ENCODE measurements at regions of chr1 and their contacts with region 1.

Region 1: GRCh38 chr1:172588296-172589291 is 55.6 kb downstream of the SUCO start:
- DNase-seq: no peak
- ATAC-seq: peak in 1 of 4 experiments; percentile 19
- H3K4me3 ChIP-seq: no peak overlapping the region
- H3K4me3 Mint-ChIP-seq: no peak overlapping the region
- H3K27ac ChIP-seq: no peak overlapping the region
- H3K27ac Mint-ChIP-seq: peak overlapping the region; percentile 60 to 65
- H3K4me1 ChIP-seq: no peaks in the 10 kb centered on the region
- H3K4me1 Mint-ChIP-seq: peaks cover 13 to 29% (median 21%) of the 10 kb centered on the region in 3 donors
- H3K27me3 ChIP-seq: no peaks in the 10 kb centered on the region
- H3K27me3 Mint-ChIP-seq: no peaks in the 10 kb centered on the region

Region 2: GRCh38 chr1:172566196-172566997 is 22.2 kb before region 1 on chr1:
- CTCF ChIA-PET with region 1: no interaction called
- POLR2A ChIA-PET with region 1: no interaction called
- DNase-seq: no peak
- ATAC-seq: no peak
- H3K4me3 ChIP-seq: no peak overlapping the region
- H3K4me3 Mint-ChIP-seq: no peak overlapping the region
- H3K27ac ChIP-seq: no peak overlapping the region
- H3K27ac Mint-ChIP-seq: peak overlapping the region in 1 of 2 donors; percentile 43
- H3K4me1 ChIP-seq: no peaks in the 10 kb centered on the region
- H3K4me1 Mint-ChIP-seq: peaks cover 5 to 23% (median 5%) of the 10 kb centered on the region in 3 donors
- H3K27me3 ChIP-seq: no peaks in the 10 kb centered on the region
- H3K27me3 Mint-ChIP-seq: no peaks in the 10 kb centered on the region

Region 3: GRCh38 chr1:172603816-172604215 is 15.2 kb after region 1 on chr1:
- CTCF ChIA-PET with region 1: no interaction called
- POLR2A ChIA-PET with region 1: no interaction called
- DNase-seq: no peak
- ATAC-seq: no peak
- H3K4me3 ChIP-seq: no peak overlapping the region
- H3K4me3 Mint-ChIP-seq: no peak overlapping the region
- H3K27ac ChIP-seq: no peak overlapping the region
- H3K27ac Mint-ChIP-seq: peak overlapping the region in 1 of 2 donors; percentile 24
- H3K4me1 ChIP-seq: no peaks in the 10 kb centered on the region
- H3K4me1 Mint-ChIP-seq: peaks cover 2 to 16% (median 3%) of the 10 kb centered on the region in 3 donors
- H3K27me3 ChIP-seq: no peaks in the 10 kb centered on the region
- H3K27me3 Mint-ChIP-seq: no peaks in the 10 kb centered on the region

Region 4: DNA sequence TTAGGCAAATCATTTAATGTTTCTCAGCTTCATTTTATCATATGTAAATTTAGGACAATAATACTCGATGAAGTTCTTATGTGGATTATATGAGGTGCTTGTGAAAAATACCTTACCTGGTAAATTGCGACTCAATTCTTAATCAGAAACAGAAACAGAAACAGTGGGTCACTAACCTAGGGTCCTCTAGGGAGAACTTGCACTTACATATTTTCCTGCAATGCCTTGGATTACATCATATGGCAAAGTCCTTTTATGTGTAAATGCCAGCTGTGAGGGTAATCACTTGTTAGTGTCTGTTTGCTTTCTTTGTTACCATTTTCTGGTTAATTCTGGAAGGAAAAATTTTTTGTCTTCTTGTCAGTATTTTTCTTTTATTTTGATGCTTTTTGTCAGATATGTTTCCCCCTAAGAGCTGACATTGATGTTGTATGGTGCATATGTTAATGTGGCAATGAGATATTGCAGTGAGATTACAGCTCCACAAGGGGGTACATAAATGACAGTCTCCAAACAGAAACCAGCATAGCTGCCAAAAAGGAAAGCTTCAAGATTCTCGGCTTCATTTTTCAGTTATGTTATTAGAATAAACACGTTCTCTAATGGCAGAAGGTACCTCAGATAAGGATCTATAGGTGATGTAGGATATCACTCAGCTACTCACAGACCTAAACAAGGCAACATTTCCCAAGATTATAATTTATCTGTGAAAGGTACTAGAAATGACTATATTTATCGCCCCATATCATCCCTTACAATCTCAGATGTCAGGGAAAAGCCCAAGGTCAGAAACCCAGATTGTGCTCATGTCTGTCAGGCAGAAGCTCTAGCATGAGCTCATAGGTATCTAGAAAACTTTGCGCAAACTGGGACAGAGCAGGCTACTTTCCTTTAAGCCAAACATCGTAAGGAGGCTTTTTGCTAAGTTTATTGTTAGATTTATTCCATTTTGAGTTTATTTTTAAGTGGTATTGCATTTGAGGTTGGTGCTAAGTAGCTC is 190.2 kb after region 1 on chr1:
- CTCF ChIA-PET with region 1: no interaction called
- POLR2A ChIA-PET with region 1: interaction called in 1 of 2 experiments, 13 read pairs
- DNase-seq: peak in 1 of 35 experiments; percentile 44
- ATAC-seq: peak; percentile 61 to 74 (median 66)
- H3K4me3 ChIP-seq: peak overlapping the region in 1 of 2 donors; percentile 24
- H3K4me3 Mint-ChIP-seq: peak overlapping the region; percentile 38 to 42 (median 40)
- H3K27ac ChIP-seq: no peak overlapping the region
- H3K27ac Mint-ChIP-seq: peak overlapping the region in 1 of 2 donors; percentile 31
- H3K4me1 ChIP-seq: no peaks in the 10 kb centered on the region
- H3K4me1 Mint-ChIP-seq: peaks cover 7 to 24% (median 15%) of the 10 kb centered on the region in 3 donors
- H3K27me3 ChIP-seq: no peaks in the 10 kb centered on the region
- H3K27me3 Mint-ChIP-seq: no peaks in the 10 kb centered on the region